Naive thymus-derived CD4-positive, alpha-beta T cell (primary cell): ENCODE measurements at regions of chr19 and their contacts with region 1.

Region 1: GRCh38 chr19:506404-507285 is 652 bp upstream of the TPGS1 start:
- DNase-seq: peak; percentile 88 to 99 (median 98)
- ATAC-seq: peak; percentile 67
- H3K4me3 ChIP-seq: peak overlapping the region; percentile 100
- H3K4me3 Mint-ChIP-seq: peak overlapping the region; percentile 89 to 100 (median 97)
- H3K27ac ChIP-seq: peak overlapping the region; percentile 87
- H3K27ac Mint-ChIP-seq: peak overlapping the region; percentile 96 to 100 (median 99)
- H3K4me1 ChIP-seq: peaks cover 29 to 40% of the 10 kb centered on the region in 2 donors
- H3K4me1 Mint-ChIP-seq: peaks cover 21 to 49% (median 46%) of the 10 kb centered on the region in 7 donors
- H3K27me3 ChIP-seq: no peaks in the 10 kb centered on the region
- H3K27me3 Mint-ChIP-seq: no peaks in the 10 kb centered on the region

Region 2: GRCh38 chr19:262125-262524 is 244.5 kb before region 1 on chr19:
- CTCF ChIA-PET with region 1: no interaction called
- POLR2A ChIA-PET with region 1: no interaction called
- intact Hi-C with region 1: loop called in 1 of 2 experiments (anchors 2 kb)
- DNase-seq: no peak
- ATAC-seq: no peak
- H3K4me3 ChIP-seq: no peak overlapping the region
- H3K4me3 Mint-ChIP-seq: peak overlapping the region in 1 of 10 donors; percentile 27
- H3K27ac ChIP-seq: no peak overlapping the region
- H3K27ac Mint-ChIP-seq: peak overlapping the region in 1 of 9 donors; percentile 52
- H3K4me1 ChIP-seq: no peaks in the 10 kb centered on the region
- H3K4me1 Mint-ChIP-seq: peaks cover 0 to 15% (median 7%) of the 10 kb centered on the region in 7 donors
- H3K27me3 ChIP-seq: no peaks in the 10 kb centered on the region
- H3K27me3 Mint-ChIP-seq: peaks cover 29 to 60% (median 37%) of the 10 kb centered on the region in 5 donors

Region 3: GRCh38 chr19:355134-355533 is 151.5 kb before region 1 on chr19:
- CTCF ChIA-PET with region 1: no interaction called
- POLR2A ChIA-PET with region 1: no interaction called
- intact Hi-C with region 1: no loop called
- DNase-seq: no peak
- ATAC-seq: no peak
- H3K4me3 ChIP-seq: no peak overlapping the region
- H3K4me3 Mint-ChIP-seq: no peak overlapping the region
- H3K27ac ChIP-seq: no peak overlapping the region
- H3K27ac Mint-ChIP-seq: no peak overlapping the region
- H3K4me1 ChIP-seq: no peaks in the 10 kb centered on the region
- H3K4me1 Mint-ChIP-seq: peaks cover 0 to 3% (median 0%) of the 10 kb centered on the region in 7 donors
- H3K27me3 ChIP-seq: no peaks in the 10 kb centered on the region
- H3K27me3 Mint-ChIP-seq: peaks cover 4 to 11% (median 6%) of the 10 kb centered on the region in 5 donors

Region 4: DNA sequence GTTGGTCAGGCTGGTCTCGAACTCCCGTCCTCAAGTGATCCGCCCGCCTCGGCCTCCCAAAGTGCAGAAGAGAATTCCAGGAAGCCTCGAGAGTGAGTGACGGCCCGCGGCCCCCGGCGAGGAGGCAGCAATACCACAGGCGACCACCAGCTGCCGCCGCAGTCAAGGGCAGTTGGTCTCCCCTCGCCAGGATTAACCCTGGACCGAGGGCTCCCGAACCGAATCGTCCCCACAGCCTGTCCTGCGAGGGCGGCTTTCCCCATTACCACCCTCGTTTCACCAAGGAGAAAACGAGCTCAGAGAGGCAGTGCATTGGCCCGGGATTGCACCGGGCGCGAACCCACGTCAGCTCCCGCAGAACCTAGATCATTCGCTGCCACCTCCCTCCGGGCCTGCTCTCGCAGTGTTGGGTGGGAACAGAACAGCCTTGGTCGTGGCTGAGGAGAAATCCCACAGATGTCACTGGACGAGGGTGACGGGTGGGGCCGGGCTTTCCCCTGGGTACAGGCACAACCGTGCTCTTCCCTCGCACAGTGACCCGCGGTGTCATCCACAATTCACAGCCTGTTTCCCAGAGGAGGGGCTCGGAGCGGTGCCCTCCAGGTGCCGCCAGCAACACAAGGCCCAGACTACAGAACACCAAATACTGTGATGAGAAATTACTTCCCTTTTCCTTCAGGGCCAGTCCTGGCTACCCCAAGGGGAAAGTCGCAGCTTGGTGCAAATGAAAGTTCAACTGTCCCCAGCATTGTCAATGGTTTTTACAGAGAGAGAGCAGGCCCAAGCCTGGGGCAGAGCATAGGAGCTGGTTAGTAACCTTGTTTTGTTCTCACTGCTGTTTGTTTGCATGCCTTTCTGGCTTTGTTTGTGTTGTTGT is 122.5 kb before region 1 on chr19:
- CTCF ChIA-PET with region 1: interaction called, 4 read pairs
- POLR2A ChIA-PET with region 1: no interaction called
- intact Hi-C with region 1: loop called in 1 of 2 experiments (anchors 1 kb)
- DNase-seq: no peak
- ATAC-seq: no peak
- H3K4me3 ChIP-seq: no peak overlapping the region
- H3K4me3 Mint-ChIP-seq: no peak overlapping the region
- H3K27ac ChIP-seq: no peak overlapping the region
- H3K27ac Mint-ChIP-seq: peak overlapping the region in 3 of 9 donors; percentile 13 to 62 (median 21)
- H3K4me1 ChIP-seq: no peaks in the 10 kb centered on the region
- H3K4me1 Mint-ChIP-seq: peaks cover 5 to 11% (median 9%) of the 10 kb centered on the region in 7 donors
- H3K27me3 ChIP-seq: peaks cover 0 to 3% of the 10 kb centered on the region in 2 donors
- H3K27me3 Mint-ChIP-seq: peaks cover 41 to 65% (median 48%) of the 10 kb centered on the region in 5 donors

Region 5: GRCh38 chr19:495402-496186 is 11.1 kb before region 1 on chr19:
- CTCF ChIA-PET with region 1: interaction called, 8 read pairs
- POLR2A ChIA-PET with region 1: interaction called, 18 read pairs
- intact Hi-C with region 1: loop called in 1 of 2 experiments (anchors 1 kb)
- DNase-seq: peak in 7 of 9 donors; percentile 21 to 64 (median 47)
- ATAC-seq: peak; percentile 72
- H3K4me3 ChIP-seq: no peak overlapping the region
- H3K4me3 Mint-ChIP-seq: peak overlapping the region in 1 of 10 donors; percentile 59
- H3K27ac ChIP-seq: no peak overlapping the region
- H3K27ac Mint-ChIP-seq: no peak overlapping the region
- H3K4me1 ChIP-seq: peaks cover 0 to 8% of the 10 kb centered on the region in 2 donors
- H3K4me1 Mint-ChIP-seq: peaks cover 3 to 13% (median 9%) of the 10 kb centered on the region in 7 donors
- H3K27me3 ChIP-seq: peaks cover 0 to 6% of the 10 kb centered on the region in 2 donors
- H3K27me3 Mint-ChIP-seq: peaks cover 6 to 23% (median 8%) of the 10 kb centered on the region in 5 donors

Region 6: DNA sequence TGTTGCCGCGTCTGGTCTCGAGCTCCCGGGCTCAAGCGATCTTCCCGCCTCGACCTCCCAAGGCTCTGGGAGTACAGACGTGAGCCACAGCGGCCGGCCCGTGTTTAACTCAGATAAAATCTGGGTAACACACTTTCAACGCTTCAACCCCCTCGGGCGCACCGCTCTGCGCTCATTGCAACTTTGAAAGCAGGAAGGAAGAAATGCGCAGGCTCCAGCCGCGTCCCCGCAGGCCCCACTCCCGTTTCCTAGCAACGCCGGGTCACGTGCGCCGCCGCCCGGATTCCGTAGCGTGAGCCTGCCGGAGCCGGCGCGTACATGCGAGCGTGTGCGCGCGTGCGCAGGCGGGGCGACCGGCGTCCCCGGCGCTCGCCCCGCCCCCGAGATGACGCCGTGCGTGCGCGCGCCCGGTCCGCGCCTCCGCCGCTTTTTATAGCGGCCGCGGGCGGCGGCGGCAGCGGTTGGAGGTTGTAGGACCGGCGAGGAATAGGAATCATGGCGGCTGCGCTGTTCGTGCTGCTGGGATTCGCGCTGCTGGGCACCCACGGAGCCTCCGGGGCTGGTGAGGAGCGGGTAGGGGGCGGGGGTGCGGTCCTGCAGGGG is 65.6 kb after region 1 on chr19 and contains the start of gene BSG:
- CTCF ChIA-PET with region 1: interaction called, 3 read pairs
- POLR2A ChIA-PET with region 1: interaction called, 5 read pairs
- intact Hi-C with region 1: loop called (anchors 1 kb)
- DNase-seq: peak; percentile 96 to 99 (median 99)
- ATAC-seq: peak; percentile 89
- H3K4me3 ChIP-seq: peak within 1 kb of the TSS; percentile 75
- H3K4me3 Mint-ChIP-seq: peak within 1 kb of the TSS; percentile 87 to 99 (median 96)
- H3K27ac ChIP-seq: peak within 1 kb of the TSS; percentile 93
- H3K27ac Mint-ChIP-seq: peak within 1 kb of the TSS; percentile 92 to 99 (median 96)
- H3K4me1 ChIP-seq: peaks cover 16 to 19% of the 10 kb centered on the region in 2 donors
- H3K4me1 Mint-ChIP-seq: peaks cover 12 to 49% (median 36%) of the 10 kb centered on the region in 7 donors
- H3K27me3 ChIP-seq: no peaks in the 10 kb centered on the region
- H3K27me3 Mint-ChIP-seq: peaks cover 0 to 4% (median 0%) of the 10 kb centered on the region in 5 donors
- total RNA-seq, gene BSG: 109 to 247 (median 120) TPM

Region 7: DNA sequence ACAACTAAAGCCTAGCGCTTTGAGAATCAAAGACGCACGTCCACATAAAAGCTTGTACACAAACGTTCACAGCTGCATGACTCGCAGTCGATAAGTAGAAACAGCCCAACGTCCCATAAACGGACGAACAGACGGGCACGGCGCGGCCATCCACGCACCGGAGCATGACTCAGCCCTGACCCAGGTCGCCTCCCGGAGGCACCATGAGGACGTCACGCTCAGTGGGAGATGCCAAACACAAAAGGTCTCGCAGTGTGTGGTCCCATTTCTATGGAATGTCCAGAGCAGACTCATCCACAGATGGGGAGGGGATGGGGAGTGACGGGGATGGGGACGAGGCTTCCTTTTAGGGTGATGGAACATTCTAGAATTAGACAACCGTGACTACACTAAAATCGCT is 117.3 kb after region 1 on chr19:
- CTCF ChIA-PET with region 1: no interaction called
- POLR2A ChIA-PET with region 1: no interaction called
- intact Hi-C with region 1: no loop called
- DNase-seq: no peak
- ATAC-seq: no peak
- H3K4me3 ChIP-seq: no peak overlapping the region
- H3K4me3 Mint-ChIP-seq: no peak overlapping the region
- H3K27ac ChIP-seq: no peak overlapping the region
- H3K27ac Mint-ChIP-seq: no peak overlapping the region
- H3K4me1 ChIP-seq: no peaks in the 10 kb centered on the region
- H3K4me1 Mint-ChIP-seq: peaks cover 3 to 15% (median 6%) of the 10 kb centered on the region in 7 donors
- H3K27me3 ChIP-seq: no peaks in the 10 kb centered on the region
- H3K27me3 Mint-ChIP-seq: no peaks in the 10 kb centered on the region

Region 8: GRCh38 chr19:662962-663681 is 156.5 kb after region 1 on chr19 and contains the start of gene RNF126:
- CTCF ChIA-PET with region 1: interaction called, 9 read pairs
- POLR2A ChIA-PET with region 1: interaction called, 5 read pairs
- intact Hi-C with region 1: loop called in 1 of 2 experiments (anchors 1 kb)
- DNase-seq: peak; percentile 83 to 92 (median 88)
- ATAC-seq: peak; percentile 78
- H3K4me3 ChIP-seq: peak within 1 kb of the TSS; percentile 92
- H3K4me3 Mint-ChIP-seq: peak within 1 kb of the TSS; percentile 95 to 99 (median 98)
- H3K27ac ChIP-seq: peak within 1 kb of the TSS; percentile 96
- H3K27ac Mint-ChIP-seq: peak within 1 kb of the TSS; percentile 93 to 98 (median 97)
- H3K4me1 ChIP-seq: peaks cover 27 to 30% of the 10 kb centered on the region in 2 donors
- H3K4me1 Mint-ChIP-seq: peaks cover 20 to 40% (median 32%) of the 10 kb centered on the region in 7 donors
- H3K27me3 ChIP-seq: no peaks in the 10 kb centered on the region
- H3K27me3 Mint-ChIP-seq: peaks cover 0 to 2% (median 0%) of the 10 kb centered on the region in 5 donors
- total RNA-seq, gene RNF126: 75.1 to 110 (median 101) TPM